Caco-2 (cell line): ENCODE measurements at regions of chr12 and their contacts with region 1.

Region 1: DNA sequence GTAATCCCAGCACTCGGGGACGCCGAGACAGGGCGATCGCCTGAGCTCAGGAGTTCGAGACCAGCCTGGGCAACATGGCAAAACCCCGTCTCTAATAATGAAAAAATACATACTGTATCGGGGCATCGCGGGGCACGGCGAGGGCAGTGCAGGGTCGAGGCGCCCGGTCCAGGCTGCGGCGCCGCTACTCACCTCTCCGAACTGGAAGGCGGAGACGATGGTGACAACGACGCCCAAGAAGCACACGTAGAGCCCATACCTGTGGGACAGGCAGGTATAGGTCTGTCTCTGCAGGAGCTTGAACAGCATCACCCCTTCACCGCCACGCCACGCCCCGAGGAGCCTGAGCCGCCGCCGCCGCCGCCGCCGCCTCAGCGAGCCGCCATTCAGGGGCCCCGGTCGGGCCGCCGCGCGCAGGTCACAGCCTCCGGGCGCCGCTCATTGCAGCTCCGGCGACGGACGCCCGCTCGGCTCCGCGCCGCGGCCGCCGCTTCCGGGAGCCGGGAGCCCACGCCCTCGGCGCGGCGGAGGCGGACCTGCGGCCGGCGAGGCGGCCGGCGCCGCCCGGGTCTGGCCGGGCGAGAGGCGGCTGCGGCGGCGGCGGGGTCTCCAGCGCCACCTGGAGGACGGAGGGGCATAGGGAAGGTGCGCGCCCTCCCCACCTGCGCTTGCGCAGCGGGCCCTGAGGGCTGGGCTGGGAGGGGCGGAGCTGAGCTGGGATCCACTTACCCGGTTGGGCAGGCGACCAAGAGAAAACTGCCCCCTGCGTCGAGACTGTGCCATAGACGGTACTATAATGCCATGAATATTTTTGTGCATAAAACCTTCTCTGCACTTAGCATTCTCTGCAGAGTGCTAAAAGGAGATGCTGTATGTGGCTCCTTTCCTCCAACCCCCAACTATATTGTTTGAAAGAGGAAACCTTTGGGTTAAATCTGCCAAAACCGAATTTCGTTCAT is at the start of gene GNPTAB:
- DNase-seq: peak; percentile 93 to 95
- H3K4me3 ChIP-seq: peak within 1 kb of the TSS; percentile 98
- H3K4me3 Mint-ChIP-seq: peak within 1 kb of the TSS; percentile 90
- H3K27ac Mint-ChIP-seq: peak within 1 kb of the TSS; percentile 77
- H3K4me1 ChIP-seq: 0 out of 2 replicates have a peak, but pooled peaks cover 4% of the 10 kb centered on the region
- H3K4me1 Mint-ChIP-seq: no peaks in the 10 kb centered on the region
- H3K27me3 ChIP-seq: no peaks in the 10 kb centered on the region
- H3K27me3 Mint-ChIP-seq: no peaks in the 10 kb centered on the region
- CTCF ChIP-seq: peak; percentile 68 to 81
- total RNA-seq, gene GNPTAB: 33.1 and 39.1 TPM in 2 replicates

Region 2: GRCh38 chr12:101407436-101408345 is 423.0 kb before region 1 on chr12 and contains the start of gene ARL1:
- CTCF ChIA-PET with region 1: no interaction called
- POLR2A ChIA-PET with region 1: no interaction called
- intact Hi-C with region 1: loop called (anchors 2 kb)
- DNase-seq: peak; percentile 87 to 89
- H3K4me3 ChIP-seq: peak within 1 kb of the TSS; percentile 86
- H3K4me3 Mint-ChIP-seq: peak within 1 kb of the TSS; percentile 94
- H3K27ac Mint-ChIP-seq: peak within 1 kb of the TSS; percentile 97
- H3K4me1 ChIP-seq: 0 out of 2 replicates have a peak, but pooled peaks cover 8% of the 10 kb centered on the region
- H3K4me1 Mint-ChIP-seq: peaks cover 6% of the 10 kb centered on the region
- H3K27me3 ChIP-seq: no peaks in the 10 kb centered on the region
- H3K27me3 Mint-ChIP-seq: no peaks in the 10 kb centered on the region
- CTCF ChIP-seq: no peak
- total RNA-seq, gene ARL1: 114 and 119 TPM in 2 replicates

Region 3: DNA sequence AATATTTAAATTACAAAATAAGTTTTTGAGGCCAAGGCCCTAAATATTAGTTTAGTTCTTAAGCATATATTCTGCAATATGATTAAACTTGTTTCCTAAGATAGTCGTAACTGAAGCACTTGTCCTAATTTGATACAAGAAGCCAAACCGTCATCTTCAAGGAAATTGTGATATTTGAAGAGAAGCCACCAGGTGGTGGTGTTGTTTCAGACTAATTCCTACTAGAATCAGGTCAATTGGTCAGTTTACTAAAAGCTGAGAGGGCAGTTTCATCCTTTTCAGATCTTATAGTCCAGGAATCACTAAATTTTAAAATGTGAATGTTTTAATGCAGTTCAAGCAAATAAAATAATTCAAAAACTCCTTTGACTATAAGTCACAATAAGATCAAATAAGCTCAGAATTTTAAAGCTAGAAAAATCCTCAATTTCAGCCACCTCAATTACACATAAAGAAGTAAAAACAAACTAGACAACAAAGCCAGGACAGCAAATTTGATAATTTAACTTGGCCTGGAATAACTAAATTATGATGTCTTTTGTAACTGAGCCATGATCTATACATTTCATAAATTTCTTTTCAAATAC is 416.0 kb before region 1 on chr12:
- CTCF ChIA-PET with region 1: interaction called, 10 read pairs
- POLR2A ChIA-PET with region 1: no interaction called
- intact Hi-C with region 1: loop called (anchors 1 kb)
- DNase-seq: peak in 1 of 2 experiments; percentile 65
- H3K4me3 ChIP-seq: no peak overlapping the region
- H3K4me3 Mint-ChIP-seq: no peak overlapping the region
- H3K27ac Mint-ChIP-seq: no peak overlapping the region
- H3K4me1 ChIP-seq: no peaks in the 10 kb centered on the region
- H3K4me1 Mint-ChIP-seq: no peaks in the 10 kb centered on the region
- H3K27me3 ChIP-seq: no peaks in the 10 kb centered on the region
- H3K27me3 Mint-ChIP-seq: no peaks in the 10 kb centered on the region
- CTCF ChIP-seq: peak; percentile 42 to 58

Region 4: GRCh38 chr12:101490286-101490920 is 340.2 kb before region 1 on chr12:
- CTCF ChIA-PET with region 1: no interaction called
- POLR2A ChIA-PET with region 1: no interaction called
- intact Hi-C with region 1: loop called (anchors 2 kb)
- DNase-seq: peak; percentile 44 to 55
- H3K4me3 ChIP-seq: no peak overlapping the region
- H3K4me3 Mint-ChIP-seq: no peak overlapping the region
- H3K27ac Mint-ChIP-seq: no peak overlapping the region
- H3K4me1 ChIP-seq: 0 out of 2 replicates have a peak, but pooled peaks cover 3% of the 10 kb centered on the region
- H3K4me1 Mint-ChIP-seq: no peaks in the 10 kb centered on the region
- H3K27me3 ChIP-seq: no peaks in the 10 kb centered on the region
- H3K27me3 Mint-ChIP-seq: no peaks in the 10 kb centered on the region
- CTCF ChIP-seq: peak; percentile 58 to 80

Region 5: GRCh38 chr12:101773650-101774162 is 56.9 kb before region 1 on chr12:
- CTCF ChIA-PET with region 1: interaction called, 34 read pairs
- POLR2A ChIA-PET with region 1: no interaction called
- intact Hi-C with region 1: loop called (anchors 1 kb)
- DNase-seq: peak; percentile 53 to 65
- H3K4me3 ChIP-seq: no peak overlapping the region
- H3K4me3 Mint-ChIP-seq: no peak overlapping the region
- H3K27ac Mint-ChIP-seq: no peak overlapping the region
- H3K4me1 ChIP-seq: no peaks in the 10 kb centered on the region
- H3K4me1 Mint-ChIP-seq: peaks cover 7% of the 10 kb centered on the region
- H3K27me3 ChIP-seq: no peaks in the 10 kb centered on the region
- H3K27me3 Mint-ChIP-seq: no peaks in the 10 kb centered on the region
- CTCF ChIP-seq: peak; percentile 84 to 91

Region 6: DNA sequence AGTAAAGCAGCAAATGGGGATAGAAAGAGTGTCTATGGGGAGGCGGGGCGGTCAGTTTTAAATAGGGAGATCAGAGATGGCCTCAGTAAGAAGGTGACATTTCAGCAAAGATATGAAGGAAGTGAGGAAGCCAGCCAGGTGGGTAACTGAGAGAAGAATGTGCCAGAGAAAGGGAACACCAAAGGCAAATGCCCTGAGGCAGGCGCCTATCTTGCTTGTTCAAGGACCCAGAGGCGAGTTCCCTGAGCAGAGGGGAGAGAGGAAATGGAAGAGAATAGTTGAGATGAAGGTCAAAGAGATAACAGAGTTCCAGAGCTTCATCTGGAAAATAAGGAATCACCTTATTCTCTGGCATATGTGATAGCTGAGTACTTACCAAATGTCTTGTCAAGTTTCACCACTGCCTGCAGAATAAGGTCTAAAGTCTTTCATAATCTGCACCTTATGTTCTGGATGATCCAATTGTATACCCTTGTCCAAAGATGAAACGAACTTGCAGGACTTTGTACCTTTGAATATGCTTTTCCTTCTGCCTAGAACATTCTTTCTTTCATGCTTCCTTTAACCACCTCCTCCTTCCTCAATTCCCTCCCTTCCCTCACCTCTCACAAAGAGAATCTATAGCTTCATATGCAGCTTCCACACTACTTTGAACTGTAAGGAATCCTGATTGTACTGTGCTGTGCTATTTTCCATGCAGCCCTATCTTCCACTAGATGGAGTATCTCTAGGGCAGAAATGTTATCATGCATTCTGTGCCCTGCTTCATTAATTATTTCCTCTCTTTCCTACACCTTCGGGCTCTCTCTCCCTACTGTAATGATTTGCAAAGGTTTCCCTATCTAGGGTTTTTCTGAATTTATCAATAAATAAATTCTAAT is 38.4 kb before region 1 on chr12:
- CTCF ChIA-PET with region 1: interaction called, 9 read pairs
- POLR2A ChIA-PET with region 1: no interaction called
- intact Hi-C with region 1: loop called (anchors 1 kb)
- DNase-seq: peak; percentile 14 to 55
- H3K4me3 ChIP-seq: no peak overlapping the region
- H3K4me3 Mint-ChIP-seq: no peak overlapping the region
- H3K27ac Mint-ChIP-seq: no peak overlapping the region
- H3K4me1 ChIP-seq: peaks cover 12% of the 10 kb centered on the region; the same call in 1 of the 2 replicates
- H3K4me1 Mint-ChIP-seq: peaks cover 16% of the 10 kb centered on the region
- H3K27me3 ChIP-seq: no peaks in the 10 kb centered on the region
- H3K27me3 Mint-ChIP-seq: no peaks in the 10 kb centered on the region
- CTCF ChIP-seq: peak in 1 of 2 experiments; percentile 44